SK-N-SH (cell line): ENCODE measurements at regions of chr11 and their contacts with region 1.

Region 1: DNA sequence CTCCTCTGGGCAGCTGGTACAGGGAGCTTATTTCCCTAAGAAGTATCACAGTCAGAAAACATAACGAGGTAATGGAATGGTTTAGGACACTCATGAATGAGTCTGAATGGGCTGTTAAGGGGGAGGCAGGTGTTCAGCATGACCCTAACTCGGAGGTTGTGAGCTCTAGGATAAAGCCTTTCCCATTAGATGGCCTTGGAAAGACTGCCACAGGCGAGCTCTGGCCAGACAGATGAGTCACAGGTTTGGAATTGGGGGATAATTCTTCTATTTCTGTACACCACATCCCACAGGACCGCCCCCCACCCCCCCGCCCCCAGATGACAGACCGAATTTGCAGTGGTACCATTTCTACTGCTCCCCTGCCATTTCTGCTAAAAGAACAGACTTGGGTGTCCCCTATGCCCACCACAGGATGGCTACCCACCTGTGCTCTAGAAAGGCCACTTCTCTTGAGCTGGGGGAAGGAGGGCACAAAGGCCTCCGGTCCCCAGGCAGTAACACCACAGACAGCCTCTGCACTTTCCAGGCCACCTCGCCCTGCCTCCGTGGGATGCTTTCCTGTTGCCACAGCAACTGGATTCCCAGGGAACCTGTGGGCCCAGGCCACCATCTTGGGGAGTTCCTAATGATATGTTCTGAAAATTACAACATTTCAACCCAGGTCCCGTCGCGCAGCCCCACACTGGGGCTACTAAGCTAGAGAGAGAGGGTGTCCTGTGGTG is 76.7 kb downstream of the TRIM29 start:
- DNase-seq: no peak
- H3K4me3 ChIP-seq: no peak overlapping the region
- H3K27ac ChIP-seq: no peak overlapping the region
- H3K4me1 ChIP-seq: peaks cover 0 to 6% of the 10 kb centered on the region in 2 experiments; a peak in 1 of 4 replicates
- H3K27me3 ChIP-seq: 0 out of 2 replicates have a peak, but pooled peaks cover 6% of the 10 kb centered on the region
- CTCF ChIP-seq: no peak
- EP300 ChIP-seq: no peak
- RAD21 ChIP-seq: no peak

Region 2: DNA sequence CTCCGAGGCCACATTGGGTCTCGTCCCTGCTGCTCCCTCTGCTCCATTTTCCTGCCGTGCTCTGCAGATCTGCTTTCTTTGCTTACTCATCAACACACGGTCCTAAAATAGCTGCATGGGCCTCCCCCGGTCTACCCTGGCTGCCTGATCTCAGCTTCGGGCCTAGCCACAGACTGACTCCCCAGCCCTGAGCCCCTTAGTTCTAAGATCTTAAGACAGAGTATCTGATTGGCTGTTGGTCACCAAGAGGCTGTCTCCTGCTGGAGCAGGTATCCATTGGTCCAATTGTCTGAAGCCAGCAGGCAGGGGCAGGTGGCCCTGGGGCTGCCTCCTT is 278.5 kb before region 1 on chr11:
- CTCF ChIA-PET with region 1: no interaction called
- POLR2A ChIA-PET with region 1: no interaction called
- DNase-seq: no peak
- H3K4me3 ChIP-seq: no peak overlapping the region
- H3K27ac ChIP-seq: peak overlapping the region in 1 of 2 experiments; percentile 77; a peak in 2 of 4 replicates
- H3K4me1 ChIP-seq: peaks cover 0 to 61% of the 10 kb centered on the region in 2 experiments; a peak in 2 of 4 replicates
- H3K27me3 ChIP-seq: no peaks in the 10 kb centered on the region; the same call in none of the 2 replicates
- CTCF ChIP-seq: no peak
- EP300 ChIP-seq: no peak
- RAD21 ChIP-seq: no peak

Region 3: DNA sequence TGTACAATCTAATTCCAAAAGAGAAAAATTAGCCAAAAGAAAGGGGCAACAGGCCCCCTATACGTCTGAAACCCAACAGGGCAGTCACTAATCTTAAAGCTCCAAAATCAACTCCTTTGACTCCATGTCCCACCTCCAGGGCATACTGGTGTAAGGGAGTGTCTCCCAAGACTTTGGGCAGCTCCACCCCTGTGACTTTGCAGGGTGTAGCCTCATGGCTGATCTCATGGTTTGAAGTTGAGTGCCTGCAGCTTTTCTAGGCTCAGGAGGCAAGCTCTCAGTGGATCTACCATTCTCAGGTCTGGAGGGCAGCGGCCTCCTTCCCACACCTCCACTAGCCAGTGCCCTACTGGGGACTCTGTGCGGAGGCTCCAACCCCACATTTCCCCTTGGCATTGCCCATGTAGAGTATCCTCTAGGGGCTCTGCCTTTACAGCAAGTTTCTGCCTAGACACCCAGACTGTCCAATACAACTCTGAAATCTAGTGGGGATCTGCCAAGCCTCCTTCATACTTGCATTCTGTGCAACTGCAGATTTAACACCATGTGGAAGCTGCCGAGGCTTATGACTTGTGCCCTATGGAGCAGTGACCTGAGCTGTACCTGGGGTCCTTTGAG is 17.8 kb before region 1 on chr11:
- CTCF ChIA-PET with region 1: interaction called, 10 read pairs
- POLR2A ChIA-PET with region 1: no interaction called
- DNase-seq: no peak
- H3K4me3 ChIP-seq: no peak overlapping the region
- H3K27ac ChIP-seq: no peak overlapping the region
- H3K4me1 ChIP-seq: no peaks in the 10 kb centered on the region
- H3K27me3 ChIP-seq: no peaks in the 10 kb centered on the region
- CTCF ChIP-seq: no peak
- EP300 ChIP-seq: no peak
- RAD21 ChIP-seq: no peak